Prostate gland (tissue), 2 donors: ENCODE measurements at regions of chr6 and their contacts with region 1.

Region 1: DNA sequence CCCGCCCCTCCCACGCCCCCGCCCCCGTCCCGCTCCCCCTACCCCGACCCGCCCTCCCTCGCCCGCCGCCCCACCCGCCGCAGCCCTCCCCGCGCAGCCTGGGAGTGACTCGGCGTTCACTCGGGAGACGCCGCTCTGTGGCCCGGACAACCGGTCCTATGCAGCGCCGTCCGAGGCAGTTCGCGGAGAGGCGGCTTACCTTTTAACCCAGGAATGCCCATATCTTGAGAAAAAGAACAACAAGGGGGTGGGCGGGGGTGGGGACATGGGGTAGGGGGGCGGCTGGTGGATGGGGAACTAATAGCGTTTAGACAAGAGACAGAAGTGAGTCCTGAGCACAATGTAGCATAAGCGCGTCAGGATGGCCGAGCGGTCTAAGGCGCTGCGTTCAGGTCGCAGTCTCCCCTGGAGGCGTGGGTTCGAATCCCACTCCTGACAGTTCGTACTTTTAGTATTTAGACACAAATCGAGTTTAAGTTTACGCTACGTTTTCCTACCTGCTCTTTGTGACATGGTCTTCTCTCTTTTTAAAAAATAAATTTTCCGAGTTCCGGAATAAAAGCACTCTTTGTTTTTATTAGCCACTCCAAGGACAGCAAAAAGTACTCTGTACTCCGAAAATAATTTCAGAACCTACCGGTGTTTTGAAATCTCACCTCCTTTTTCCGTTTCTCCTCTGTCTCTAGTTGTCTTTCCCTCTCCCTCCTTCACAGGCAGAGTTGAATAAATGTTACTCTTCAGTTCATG is 17.1 kb upstream of the HMGN4 start:
- DNase-seq: peak; percentile 88
- H3K4me3 ChIP-seq: peak overlapping the region; percentile 54 to 61
- H3K27ac ChIP-seq: peak overlapping the region; percentile 94 to 99
- H3K4me1 ChIP-seq: no peaks in the 10 kb centered on the region
- H3K27me3 ChIP-seq: no peaks in the 10 kb centered on the region
- CTCF ChIP-seq: peak in 2 of 4 experiments; percentile 6 to 42
- POLR2A ChIP-seq: no peak

Region 2: DNA sequence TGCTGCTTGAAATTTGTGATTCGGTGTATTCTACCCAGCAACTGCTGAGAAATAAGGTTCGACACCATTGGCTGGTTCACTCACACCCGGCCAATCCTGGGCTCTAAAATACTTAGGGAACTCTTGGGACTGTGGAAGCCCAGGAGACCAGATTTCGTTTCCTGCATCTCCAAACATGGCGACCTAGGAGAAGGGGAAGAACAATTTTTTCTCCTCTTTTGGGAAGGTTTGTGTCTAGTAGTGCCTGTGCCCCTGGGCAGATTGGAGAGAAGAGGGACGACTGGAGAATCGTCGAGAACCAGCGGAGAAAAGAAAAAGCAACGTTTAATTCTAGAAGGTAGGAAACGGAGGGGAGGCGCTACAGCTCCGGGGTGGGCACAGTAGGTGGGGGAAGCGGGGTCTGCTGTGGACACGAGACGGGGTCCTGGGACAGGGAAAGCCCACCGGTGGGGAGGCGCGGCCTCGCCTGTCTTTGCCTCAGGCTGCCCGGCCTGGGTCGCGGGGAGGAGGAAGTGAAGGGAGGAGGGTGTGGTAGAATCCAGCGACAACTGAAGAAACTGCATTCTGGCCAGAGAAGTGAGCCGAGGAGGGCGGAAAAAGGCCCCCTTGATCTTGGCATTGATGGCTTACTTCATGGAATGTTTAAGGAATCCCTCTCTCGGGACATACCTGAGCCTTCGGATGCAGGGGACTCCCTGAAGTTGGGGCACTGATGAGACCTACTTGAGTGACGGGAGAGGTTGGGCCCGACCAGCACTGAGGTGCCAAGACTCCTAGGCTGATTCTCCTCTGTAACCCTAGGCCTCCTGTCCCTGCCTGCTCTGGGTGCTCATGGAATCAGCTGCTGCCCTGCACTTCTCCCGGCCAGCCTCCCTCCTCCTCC is 63.0 kb before region 1 on chr6 and contains the start of gene BTN2A1:
- intact Hi-C with region 1: loop called (anchors 5 kb)
- DNase-seq: peak; percentile 89
- H3K4me3 ChIP-seq: peak within 1 kb of the TSS; percentile 66 to 81
- H3K27ac ChIP-seq: peak within 1 kb of the TSS; percentile 93 to 98
- H3K4me1 ChIP-seq: peaks cover 16% of the 10 kb centered on the region
- H3K27me3 ChIP-seq: no peaks in the 10 kb centered on the region
- CTCF ChIP-seq: no peak
- POLR2A ChIP-seq: peak; percentile 62
- total RNA-seq, gene BTN2A1: 11.5 to 24.1 TPM

Region 3: DNA sequence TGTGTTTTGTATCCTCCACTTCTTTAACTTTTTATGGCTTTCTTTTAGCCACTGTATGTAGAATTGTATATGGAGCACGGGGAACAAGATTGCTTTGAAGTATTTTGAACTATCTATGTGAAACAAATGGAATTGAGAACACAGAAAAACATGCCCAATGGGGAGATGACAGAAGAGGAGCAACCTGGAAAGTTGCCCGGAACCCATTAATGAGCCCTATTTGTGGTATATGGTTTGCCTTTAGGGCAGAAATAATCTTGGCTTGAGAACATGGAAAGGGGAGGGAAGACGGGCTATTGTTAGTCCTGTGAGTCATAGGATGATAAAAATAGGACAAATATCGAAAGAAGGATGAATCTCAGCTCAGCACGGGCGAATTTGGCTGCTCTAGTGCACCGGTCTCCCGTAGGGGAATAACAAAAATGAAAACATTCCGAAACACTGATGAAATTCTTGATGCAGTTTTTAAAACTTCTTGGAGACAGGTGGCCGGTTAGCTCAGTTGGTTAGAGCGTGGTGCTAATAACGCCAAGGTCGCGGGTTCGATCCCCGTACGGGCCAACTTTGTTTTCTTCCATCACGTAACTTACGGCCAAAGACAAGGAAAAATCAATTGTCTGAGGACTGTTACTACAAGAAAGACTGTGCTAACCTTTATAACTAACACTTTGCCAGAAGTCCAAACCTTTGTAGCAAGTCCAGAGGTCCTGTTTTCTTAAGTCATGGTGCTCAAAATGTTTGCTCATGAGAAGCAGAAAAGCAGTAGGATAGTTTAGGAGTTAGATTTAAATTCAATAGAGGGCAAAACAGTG is 32.8 kb after region 1 on chr6:
- intact Hi-C with region 1: loop called (anchors 2 kb)
- DNase-seq: peak; percentile 70
- H3K4me3 ChIP-seq: peak overlapping the region; percentile 30 to 31
- H3K27ac ChIP-seq: peak overlapping the region; percentile 61 to 71
- H3K4me1 ChIP-seq: no peaks in the 10 kb centered on the region
- H3K27me3 ChIP-seq: no peaks in the 10 kb centered on the region
- CTCF ChIP-seq: no peak
- POLR2A ChIP-seq: no peak